ENCODE measurements at regions of chr6 and their contacts with region 1.

Region 1: GRCh38 chr6:30914076-30914853 is at the start of gene VARS2:
- DNase-seq: peak; percentile 91 to 96 (median 93)
- ATAC-seq: peak; percentile 91 to 96 (median 96)
- H3K4me3 ChIP-seq: peak within 1 kb of the TSS; percentile 38 to 92 (median 68)
- H3K27ac ChIP-seq: peak within 1 kb of the TSS; percentile 85 to 98 (median 93)
- H3K4me1 ChIP-seq: peaks cover 0 to 30% (median 23%) of the 10 kb centered on the region in 12 donors
- H3K27me3 ChIP-seq: no peaks in the 10 kb centered on the region
- CTCF ChIP-seq: peak in 11 of 12 donors; percentile 14 to 64 (median 43)
- POLR2A ChIP-seq: peak in 1 of 2 donors; percentile 92
- total RNA-seq, gene VARS2: 10.7 to 28.5 (median 18.8) TPM

Region 2: GRCh38 chr6:30686908-30687658 is 227.2 kb before region 1 on chr6:
- intact Hi-C with region 1: no loop called
- DNase-seq: peak; percentile 97 to 99 (median 98)
- ATAC-seq: peak; percentile 71 to 85 (median 79)
- H3K4me3 ChIP-seq: peak overlapping the region; percentile 52 to 96 (median 74)
- H3K27ac ChIP-seq: peak overlapping the region; percentile 92 to 100 (median 98)
- H3K4me1 ChIP-seq: peaks cover 4 to 78% (median 46%) of the 10 kb centered on the region in 12 donors
- H3K27me3 ChIP-seq: no peaks in the 10 kb centered on the region
- CTCF ChIP-seq: no peak
- POLR2A ChIP-seq: no peak

Region 3: DNA sequence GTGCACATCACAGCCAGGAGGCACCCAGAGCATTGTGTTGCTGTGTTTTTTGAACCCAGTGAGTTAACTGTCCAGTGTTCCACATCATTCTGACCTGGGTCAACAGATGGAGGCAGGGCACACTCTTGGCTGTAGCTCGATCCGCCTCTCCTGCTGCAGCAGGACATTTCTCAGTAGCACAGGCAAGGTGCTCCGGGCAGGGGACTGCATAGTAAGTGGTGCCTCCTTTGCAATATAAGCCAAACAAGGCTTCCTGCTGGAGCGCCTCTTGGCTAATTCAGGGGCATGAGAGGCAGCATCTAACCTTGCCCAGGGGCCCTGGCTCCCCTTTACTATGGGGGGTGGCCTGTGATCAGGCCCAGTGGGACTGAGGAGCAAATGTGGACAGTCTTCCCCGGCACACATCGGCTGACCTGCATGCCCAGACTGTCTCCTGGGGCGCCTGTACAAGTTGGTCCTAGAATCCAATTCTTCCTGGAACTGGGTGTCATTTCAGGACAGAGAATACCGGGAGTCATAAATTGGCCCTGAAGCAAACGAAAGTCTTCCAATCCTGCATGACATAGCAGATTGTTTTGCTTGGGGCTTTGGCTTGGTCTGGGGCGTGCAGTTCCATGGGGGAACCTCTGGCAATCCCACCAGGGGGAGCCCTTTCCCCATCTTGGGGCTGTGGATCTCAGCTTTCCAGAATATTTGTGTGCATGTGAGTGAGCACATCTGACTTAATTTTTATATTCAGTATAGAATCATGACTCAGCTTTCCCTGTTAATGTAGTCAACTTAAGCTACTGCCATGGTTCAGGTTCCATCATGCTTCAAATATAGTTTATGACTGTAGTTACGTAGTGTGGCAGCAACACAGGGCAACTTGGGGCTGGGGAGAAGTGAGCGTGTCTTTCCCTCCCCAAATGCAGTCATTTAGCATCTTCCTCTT is 86.0 kb before region 1 on chr6:
- intact Hi-C with region 1: loop called in 1 of 10 experiments (anchors 1 kb)
- DNase-seq: peak; percentile 84 to 90 (median 89)
- ATAC-seq: peak; percentile 90 to 95 (median 94)
- H3K4me3 ChIP-seq: peak overlapping the region in 6 of 12 donors; percentile 6 to 44 (median 14)
- H3K27ac ChIP-seq: peak overlapping the region; percentile 11 to 86 (median 75)
- H3K4me1 ChIP-seq: peaks cover 0 to 53% (median 16%) of the 10 kb centered on the region in 12 donors
- H3K27me3 ChIP-seq: no peaks in the 10 kb centered on the region
- CTCF ChIP-seq: peak; percentile 92 to 98 (median 94)
- POLR2A ChIP-seq: peak in 1 of 2 donors; percentile 15

Region 4: GRCh38 chr6:30883685-30884520 is 30.4 kb before region 1 on chr6 and contains the start of gene DDR1:
- intact Hi-C with region 1: loop called in 1 of 10 experiments (anchors 2 kb)
- DNase-seq: peak; percentile 79 to 87 (median 84)
- ATAC-seq: peak; percentile 7 to 76 (median 70)
- H3K4me3 ChIP-seq: peak within 1 kb of the TSS; percentile 37 to 93 (median 74)
- H3K27ac ChIP-seq: peak within 1 kb of the TSS; percentile 11 to 88 (median 80)
- H3K4me1 ChIP-seq: peaks cover 9 to 54% (median 34%) of the 10 kb centered on the region in 12 donors
- H3K27me3 ChIP-seq: peaks cover 0 to 3% (median 0%) of the 10 kb centered on the region in 9 donors
- CTCF ChIP-seq: no peak
- POLR2A ChIP-seq: no peak
- total RNA-seq, gene DDR1: 18.0 to 50.0 (median 38.4) TPM

Region 5: DNA sequence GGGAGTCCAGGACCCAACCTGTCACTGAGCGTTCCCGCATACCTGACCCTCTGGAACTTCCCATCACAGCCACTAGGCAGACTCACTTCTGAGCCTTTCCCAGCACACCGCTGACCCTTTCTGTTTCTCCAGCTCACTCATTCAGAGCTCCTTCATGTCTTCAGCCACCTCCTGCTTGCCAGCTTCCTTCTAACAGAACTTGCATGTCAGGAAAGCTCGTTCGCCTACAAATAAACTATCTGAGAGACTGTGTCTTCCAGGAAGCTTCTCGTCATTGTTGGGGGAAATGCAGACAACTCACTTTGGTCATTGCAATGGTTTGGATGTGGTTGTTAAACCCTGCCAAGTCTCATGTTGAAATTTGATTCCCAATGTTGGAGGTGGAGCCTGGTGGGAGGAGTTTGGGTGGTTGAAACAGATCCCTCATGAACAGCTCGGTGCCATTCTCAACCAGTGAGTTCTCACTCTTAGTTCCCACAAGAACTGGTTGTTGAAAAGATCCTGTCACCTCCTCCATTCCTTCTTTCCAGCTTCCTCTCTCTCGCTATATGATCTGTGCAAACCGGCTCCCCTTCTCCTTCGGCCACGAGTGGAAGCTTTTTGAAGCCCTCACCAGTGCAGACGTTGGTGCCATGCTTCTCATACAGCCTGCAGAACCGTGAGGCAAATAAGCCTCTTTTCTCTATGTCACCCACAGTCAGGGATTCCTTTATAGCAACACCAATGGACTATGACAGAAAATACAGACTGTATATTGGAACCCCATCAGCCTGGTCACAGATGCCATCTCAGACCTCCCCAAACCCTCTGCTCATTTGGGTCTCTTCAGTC is 67.9 kb after region 1 on chr6:
- intact Hi-C with region 1: no loop called
- DNase-seq: peak in 2 of 5 donors; percentile 35 to 37
- ATAC-seq: peak in 3 of 4 donors; percentile 7 to 79 (median 78)
- H3K4me3 ChIP-seq: peak overlapping the region in 4 of 12 donors; percentile 11 to 18 (median 12)
- H3K27ac ChIP-seq: no peak overlapping the region
- H3K4me1 ChIP-seq: peaks cover 0 to 10% (median 0%) of the 10 kb centered on the region in 12 donors
- H3K27me3 ChIP-seq: peaks cover 0 to 4% (median 0%) of the 10 kb centered on the region in 9 donors
- CTCF ChIP-seq: peak in 3 of 12 donors; percentile 7 to 19 (median 10)
- POLR2A ChIP-seq: no peak

Region 6: GRCh38 chr6:31042806-31043205 is 128.5 kb after region 1 on chr6:
- intact Hi-C with region 1: loop called in 5 of 10 experiments (anchors 1 to 10 kb)
- DNase-seq: peak in 4 of 5 donors; percentile 43 to 50 (median 48)
- ATAC-seq: peak in 3 of 4 donors; percentile 52 to 63 (median 53)
- H3K4me3 ChIP-seq: no peak overlapping the region
- H3K27ac ChIP-seq: peak overlapping the region in 1 of 12 donors; percentile 38
- H3K4me1 ChIP-seq: peaks cover 0 to 14% (median 0%) of the 10 kb centered on the region in 12 donors
- H3K27me3 ChIP-seq: peaks cover 0 to 7% (median 0%) of the 10 kb centered on the region in 9 donors
- CTCF ChIP-seq: peak; percentile 30 to 60 (median 50)
- POLR2A ChIP-seq: no peak

Region 7: GRCh38 chr6:31068669-31069340 is 154.5 kb after region 1 on chr6:
- intact Hi-C with region 1: loop called in 8 of 10 experiments (anchors 1 to 5 kb)
- DNase-seq: peak; percentile 59 to 85 (median 76)
- ATAC-seq: peak; percentile 74 to 92 (median 90)
- H3K4me3 ChIP-seq: no peak overlapping the region
- H3K27ac ChIP-seq: no peak overlapping the region
- H3K4me1 ChIP-seq: peaks cover 0 to 9% (median 0%) of the 10 kb centered on the region in 12 donors
- H3K27me3 ChIP-seq: no peaks in the 10 kb centered on the region
- CTCF ChIP-seq: peak; percentile 72 to 95 (median 87)
- POLR2A ChIP-seq: no peak

Region 8: DNA sequence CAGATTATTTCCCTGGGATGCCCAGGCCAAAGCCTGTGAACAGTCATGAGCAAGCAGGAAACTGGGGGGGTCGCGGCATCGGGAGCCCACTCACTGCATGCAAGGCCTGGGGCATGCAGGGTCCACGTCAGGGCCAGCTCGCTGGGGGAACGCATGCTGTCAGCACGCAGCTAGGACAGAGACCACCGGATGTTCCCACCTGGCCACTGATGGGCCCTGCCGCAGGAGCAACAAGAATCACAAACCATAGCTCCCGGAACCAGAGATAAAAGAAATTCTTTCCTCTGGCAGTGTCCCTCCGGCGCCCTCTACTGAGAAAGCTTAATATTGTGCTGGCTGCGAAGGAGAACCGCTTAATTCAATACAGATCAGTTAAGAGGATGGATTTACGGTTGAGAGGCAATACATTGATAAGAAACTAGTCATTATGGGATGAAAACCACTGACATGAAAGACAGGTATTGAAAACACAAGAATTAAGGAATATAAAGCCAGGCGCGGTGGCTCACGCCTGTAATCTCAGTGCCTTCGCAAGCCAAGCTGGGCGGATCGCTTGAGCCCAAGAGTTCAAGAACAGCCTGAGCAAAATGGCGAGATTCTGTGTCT is 165.5 kb after region 1 on chr6:
- intact Hi-C with region 1: loop called in 3 of 10 experiments (anchors 5 kb)
- DNase-seq: peak in 4 of 5 donors; percentile 42 to 59 (median 52)
- ATAC-seq: peak in 3 of 4 donors; percentile 66 to 75 (median 69)
- H3K4me3 ChIP-seq: peak overlapping the region in 9 of 12 donors; percentile 13 to 49 (median 29)
- H3K27ac ChIP-seq: no peak overlapping the region
- H3K4me1 ChIP-seq: peaks cover 0 to 19% (median 4%) of the 10 kb centered on the region in 12 donors
- H3K27me3 ChIP-seq: no peaks in the 10 kb centered on the region
- CTCF ChIP-seq: peak; percentile 63 to 92 (median 78)
- POLR2A ChIP-seq: no peak

Region 9: GRCh38 chr6:31197559-31198305 is 283.5 kb after region 1 on chr6:
- intact Hi-C with region 1: loop called in 1 of 10 experiments (anchors 10 kb)
- DNase-seq: peak; percentile 93 to 96 (median 94)
- ATAC-seq: peak; percentile 88 to 94 (median 90)
- H3K4me3 ChIP-seq: peak overlapping the region; percentile 48 to 87 (median 80)
- H3K27ac ChIP-seq: peak overlapping the region; percentile 95 to 99 (median 98)
- H3K4me1 ChIP-seq: peaks cover 0 to 31% (median 11%) of the 10 kb centered on the region in 12 donors
- H3K27me3 ChIP-seq: no peaks in the 10 kb centered on the region
- CTCF ChIP-seq: no peak
- POLR2A ChIP-seq: peak in 1 of 2 donors; percentile 64

Measured in heart left ventricle (tissue), 16 donors.